GM10248 (cell line): ENCODE measurements at regions of chr13 and their contacts with region 1.

Region 1: DNA sequence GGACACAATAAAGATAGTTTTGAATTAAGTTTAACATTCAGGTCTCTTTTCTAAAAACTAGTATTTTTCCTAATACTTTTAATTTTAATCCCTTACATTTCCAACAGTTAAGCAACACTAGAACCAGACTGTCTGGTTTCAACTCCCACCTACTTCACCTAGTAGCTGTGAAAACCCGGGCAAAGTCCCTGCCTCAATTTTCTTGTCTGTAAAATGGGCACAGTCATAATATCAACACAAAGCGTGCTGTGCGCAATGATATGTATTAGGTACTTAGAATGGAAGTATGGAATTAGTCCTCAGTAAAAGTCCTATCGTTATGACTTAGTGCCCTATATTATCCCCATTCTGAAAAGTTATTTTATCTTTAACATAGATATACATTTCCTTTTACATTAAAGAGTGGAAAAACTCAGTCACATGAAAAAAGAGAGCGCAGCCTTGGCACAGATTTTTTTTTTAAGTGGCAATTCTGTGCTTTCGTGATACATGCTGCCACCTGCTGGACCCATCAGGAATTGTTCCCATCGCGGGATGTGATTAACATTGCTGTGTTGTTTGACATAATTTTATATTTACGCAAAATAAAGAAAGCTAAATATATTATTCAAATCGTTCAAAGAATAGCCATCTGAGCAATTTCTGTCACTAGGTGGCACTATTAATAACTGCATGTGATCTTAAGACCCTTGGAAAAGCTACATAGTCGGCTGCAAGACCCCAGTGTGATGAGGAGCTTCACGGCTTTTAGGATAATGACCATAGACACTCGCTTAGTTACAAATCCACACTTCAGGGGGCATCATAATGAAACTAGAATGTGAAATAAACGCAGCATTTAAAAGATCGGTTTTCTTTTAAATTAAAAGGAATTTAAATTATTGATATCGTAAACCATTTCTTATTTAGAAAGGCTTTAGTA is 59.9 kb downstream of the LIG4 start:
- DNase-seq: peak; percentile 23
- CTCF ChIP-seq: peak; percentile 84

Region 2: DNA sequence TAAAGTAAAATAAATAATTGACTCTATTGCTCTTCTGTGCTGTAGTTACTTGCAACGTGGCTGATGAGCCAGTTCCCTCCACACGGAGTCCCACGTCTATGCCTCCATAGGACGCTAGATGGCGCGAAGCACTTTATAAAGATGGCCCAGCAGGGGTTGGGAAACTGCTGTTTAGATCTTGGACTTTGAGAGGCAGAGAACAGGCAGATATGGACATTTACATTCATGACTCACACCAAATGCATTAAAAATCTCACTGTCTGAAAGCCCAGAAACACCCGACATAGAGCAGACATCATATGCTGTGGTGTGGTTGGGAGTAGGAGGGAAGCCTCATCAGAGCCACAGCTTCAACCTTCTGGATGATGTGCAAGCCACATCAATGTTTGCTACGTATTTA is 944.4 kb before region 1 on chr13:
- CTCF ChIA-PET with region 1: interaction called, 79 read pairs
- POLR2A ChIA-PET with region 1: no interaction called
- DNase-seq: peak; percentile 52
- CTCF ChIP-seq: peak; percentile 95

Region 3: GRCh38 chr13:107217251-107217650 is 938.2 kb before region 1 on chr13:
- CTCF ChIA-PET with region 1: interaction called, 79 read pairs
- POLR2A ChIA-PET with region 1: no interaction called
- DNase-seq: no peak
- CTCF ChIP-seq: no peak

Region 4: DNA sequence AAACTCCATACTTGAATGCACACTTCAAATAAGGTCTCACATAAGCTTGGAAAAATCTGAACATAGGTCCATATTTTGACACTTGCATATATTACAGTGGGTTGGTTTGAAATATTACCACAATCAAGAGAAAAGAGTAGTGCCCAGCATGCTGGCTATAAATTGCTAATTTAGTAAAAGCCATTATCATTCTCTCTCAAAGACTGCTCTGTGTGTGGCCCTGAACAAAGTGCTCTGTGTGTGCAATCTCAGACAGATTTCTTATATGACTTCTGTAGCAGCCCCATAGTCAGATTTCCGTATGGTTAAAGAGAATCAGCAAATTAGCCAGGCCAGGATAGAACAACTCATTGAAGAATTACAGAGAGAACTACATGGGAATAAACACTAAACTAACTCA is 18.3 kb before region 1 on chr13:
- CTCF ChIA-PET with region 1: interaction called, 45 read pairs
- POLR2A ChIA-PET with region 1: no interaction called
- DNase-seq: no peak
- CTCF ChIP-seq: no peak

Region 5: GRCh38 chr13:108166078-108166477 is 10.6 kb after region 1 on chr13:
- CTCF ChIA-PET with region 1: interaction called, 58 read pairs
- POLR2A ChIA-PET with region 1: no interaction called
- DNase-seq: no peak
- CTCF ChIP-seq: no peak

Region 6: GRCh38 chr13:108176685-108177274 is 21.3 kb after region 1 on chr13:
- CTCF ChIA-PET with region 1: interaction called, 11 read pairs
- POLR2A ChIA-PET with region 1: no interaction called
- DNase-seq: peak; percentile 41
- CTCF ChIP-seq: peak; percentile 47